Mammary epithelial cell (primary cell): ENCODE measurements at regions of chr19 and their contacts with region 1.

Region 1: DNA sequence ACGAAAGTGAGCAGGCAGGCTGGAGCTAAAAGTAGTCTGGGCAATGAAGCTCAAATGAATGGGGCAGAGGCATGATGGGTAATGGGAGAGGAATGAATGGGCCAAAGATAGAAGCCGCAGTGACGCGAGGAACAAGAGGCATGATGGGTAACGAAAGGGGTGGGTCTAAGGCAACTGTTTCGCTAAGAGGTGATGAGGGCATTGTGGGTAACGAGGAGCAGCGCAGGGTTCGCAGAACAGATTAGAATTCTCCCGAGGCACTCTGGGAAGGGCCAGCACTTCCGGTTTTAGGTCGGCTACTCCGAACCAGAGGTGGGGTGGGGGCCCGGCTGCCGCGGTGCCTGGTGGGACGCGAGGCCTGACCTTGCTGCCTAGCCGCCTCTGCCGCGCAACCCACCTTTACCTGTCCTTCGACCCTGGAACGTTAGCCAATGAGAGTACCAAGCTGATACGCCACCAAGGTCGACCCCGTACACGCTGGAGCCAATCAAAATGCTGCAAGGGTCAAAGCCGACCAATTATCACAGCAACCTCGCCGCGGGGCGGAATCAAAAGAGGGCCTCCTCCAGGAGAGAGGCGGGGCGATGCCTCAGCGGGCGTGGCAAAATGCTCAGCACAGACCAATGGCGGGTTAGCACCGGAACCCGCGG is 563 bp upstream of the TOMM40 start:
- DNase-seq: peak; percentile 100
- H3K4me3 ChIP-seq: peak overlapping the region; percentile 36 to 51 (median 43)
- H3K27ac ChIP-seq: peak overlapping the region; percentile 84
- H3K4me1 ChIP-seq: peaks cover 16% of the 10 kb centered on the region
- H3K27me3 ChIP-seq: no peaks in the 10 kb centered on the region
- CTCF ChIP-seq: no peak

Region 2: DNA sequence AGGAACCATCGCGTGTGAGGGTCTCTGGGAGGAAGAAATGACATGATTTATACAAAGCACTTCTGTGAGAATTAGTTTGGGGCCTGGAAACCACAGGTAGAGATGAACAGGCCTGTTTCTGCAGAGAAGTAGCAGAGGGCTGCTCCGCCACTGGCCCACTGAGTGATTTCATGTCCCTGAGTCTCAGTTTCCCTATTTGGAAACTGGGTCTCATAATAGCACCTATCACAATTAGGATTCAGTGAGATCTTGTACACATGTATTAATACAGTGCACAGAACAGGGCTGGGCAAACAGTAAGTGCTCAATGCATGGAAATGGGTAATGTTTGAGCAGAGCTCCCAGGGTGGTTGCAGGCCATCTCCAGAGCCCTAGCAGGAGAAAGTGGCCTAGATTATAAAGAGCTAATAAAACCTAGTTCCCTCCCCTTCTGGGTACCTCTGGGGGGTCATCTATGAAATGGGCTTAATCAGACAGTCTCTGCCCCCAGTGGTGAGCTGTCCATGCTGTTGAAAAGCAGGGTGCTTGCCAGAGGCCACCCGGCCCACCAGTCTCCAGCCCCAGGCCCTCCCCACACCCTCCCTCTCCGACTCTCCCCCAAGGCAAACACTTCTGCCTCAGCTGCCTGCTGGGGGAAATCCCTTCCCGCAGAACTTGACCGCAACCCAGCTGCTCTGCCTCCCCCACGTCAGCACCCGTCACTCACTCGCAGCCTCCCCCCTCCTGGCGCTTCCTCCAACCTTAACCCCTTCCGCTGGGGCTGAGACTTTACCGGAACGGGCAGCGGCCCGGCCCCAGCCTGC is 137.5 kb before region 1 on chr19:
- CTCF ChIA-PET with region 1: no interaction called
- dilution Hi-C with region 1: no loop called
- in situ Hi-C with region 1: no loop called
- intact Hi-C with region 1: no loop called
- DNase-seq: peak; percentile 94
- H3K4me3 ChIP-seq: peak overlapping the region in 2 of 3 experiments; percentile 36 to 40
- H3K27ac ChIP-seq: peak overlapping the region; percentile 36
- H3K4me1 ChIP-seq: peaks cover 38% of the 10 kb centered on the region
- H3K27me3 ChIP-seq: no peaks in the 10 kb centered on the region
- CTCF ChIP-seq: no peak

Region 3: GRCh38 chr19:44800461-44800860 is 90.0 kb before region 1 on chr19:
- CTCF ChIA-PET with region 1: no interaction called
- dilution Hi-C with region 1: loop called (anchors 5 kb)
- in situ Hi-C with region 1: no loop called
- intact Hi-C with region 1: loop called (anchors 10 kb)
- DNase-seq: peak; percentile 63
- H3K4me3 ChIP-seq: no peak overlapping the region
- H3K27ac ChIP-seq: no peak overlapping the region
- H3K4me1 ChIP-seq: peaks cover 3% of the 10 kb centered on the region
- H3K27me3 ChIP-seq: no peaks in the 10 kb centered on the region
- CTCF ChIP-seq: peak; percentile 98 to 99